H1 (cell line): ENCODE measurements at regions of chr10 and their contacts with region 1.

Region 1: GRCh38 chr10:52004342-52004949 is 305.1 kb upstream of the CSTF2T start:
- DNase-seq: no peak
- H3K4me3 ChIP-seq: no peak overlapping the region
- H3K27ac ChIP-seq: no peak overlapping the region
- H3K4me1 ChIP-seq: no peaks in the 10 kb centered on the region
- H3K27me3 ChIP-seq: no peaks in the 10 kb centered on the region
- CTCF ChIP-seq: peak in 2 of 3 experiments; percentile 20 to 60; a peak in 2 of 4 replicates
- EP300 ChIP-seq: no peak
- POLR2A ChIP-seq: no peak
- RAD21 ChIP-seq: peak; percentile 71 to 79

Region 2: DNA sequence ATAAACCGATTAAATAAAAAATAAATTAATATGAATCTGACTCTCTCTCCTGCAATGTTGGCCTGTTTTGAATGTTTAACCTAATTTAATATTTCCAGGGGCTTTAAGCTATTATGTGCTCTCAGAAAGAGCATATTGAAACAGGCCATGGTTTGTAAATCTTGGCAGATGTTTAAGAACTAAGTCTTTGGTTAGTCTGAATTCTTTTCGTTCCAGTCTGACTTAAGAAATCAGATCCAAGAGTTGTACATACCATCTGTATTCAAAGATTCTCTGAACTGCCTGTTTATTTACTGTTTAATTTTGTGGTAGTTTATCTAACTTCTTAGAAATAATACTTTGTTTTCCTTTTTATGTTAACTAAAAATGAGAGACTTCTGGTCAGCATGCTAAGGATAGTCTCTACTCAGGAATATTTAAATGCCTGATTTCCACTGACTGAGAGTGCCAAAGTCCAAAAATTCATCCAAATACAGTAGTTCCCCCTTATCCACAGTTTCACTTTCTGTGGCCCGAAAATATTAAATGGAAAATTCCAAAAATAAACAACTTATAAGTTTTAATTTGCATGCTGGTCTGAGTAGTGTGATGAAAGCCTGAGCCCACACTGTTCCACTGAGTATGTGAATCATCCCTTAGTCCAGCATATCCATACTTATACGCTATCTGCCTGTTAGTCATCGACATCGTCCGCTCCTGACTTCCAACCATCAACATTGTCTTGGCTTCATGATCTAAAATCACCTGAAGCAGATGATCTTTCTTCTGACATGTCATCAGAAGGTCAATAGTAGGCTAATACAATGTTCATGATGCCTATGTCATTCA is 66.9 kb before region 1 on chr10:
- CTCF ChIA-PET with region 1: no interaction called
- POLR2A ChIA-PET with region 1: no interaction called
- DNase-seq: no peak
- H3K4me3 ChIP-seq: no peak overlapping the region
- H3K27ac ChIP-seq: no peak overlapping the region
- H3K4me1 ChIP-seq: no peaks in the 10 kb centered on the region
- H3K27me3 ChIP-seq: no peaks in the 10 kb centered on the region
- CTCF ChIP-seq: no peak
- EP300 ChIP-seq: no peak
- POLR2A ChIP-seq: no peak
- RAD21 ChIP-seq: no peak

Region 3: DNA sequence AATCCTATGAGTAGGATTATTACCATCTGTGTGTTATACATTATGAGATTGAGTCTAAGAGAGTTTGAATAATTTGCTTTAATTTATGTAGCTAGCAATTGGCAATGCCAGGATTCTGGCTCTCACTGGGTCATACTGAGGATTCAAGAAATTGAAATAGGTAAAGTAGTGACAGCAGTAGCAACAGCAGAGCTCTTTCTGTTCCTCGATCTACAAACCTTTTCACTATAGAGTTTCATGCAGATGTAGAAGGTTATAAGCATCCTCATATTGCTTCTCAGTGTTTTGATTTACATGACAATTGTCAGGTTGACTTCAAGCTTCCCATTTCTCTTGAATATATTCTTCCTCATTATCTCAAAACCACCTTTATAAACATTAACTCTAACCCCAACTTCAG is 11.0 kb before region 1 on chr10:
- CTCF ChIA-PET with region 1: interaction called, 39 read pairs
- POLR2A ChIA-PET with region 1: no interaction called
- DNase-seq: no peak
- H3K4me3 ChIP-seq: no peak overlapping the region
- H3K27ac ChIP-seq: no peak overlapping the region
- H3K4me1 ChIP-seq: no peaks in the 10 kb centered on the region; a peak in 1 of 7 replicates
- H3K27me3 ChIP-seq: no peaks in the 10 kb centered on the region
- CTCF ChIP-seq: no peak
- EP300 ChIP-seq: no peak
- POLR2A ChIP-seq: no peak
- RAD21 ChIP-seq: no peak

Region 4: GRCh38 chr10:52082307-52082706 is 77.9 kb after region 1 on chr10:
- CTCF ChIA-PET with region 1: no interaction called
- POLR2A ChIA-PET with region 1: no interaction called
- DNase-seq: no peak
- H3K4me3 ChIP-seq: no peak overlapping the region
- H3K27ac ChIP-seq: no peak overlapping the region
- H3K4me1 ChIP-seq: peaks cover 0 to 2% (median 0%) of the 10 kb centered on the region in 4 experiments; a peak in 1 of 7 replicates
- H3K27me3 ChIP-seq: no peaks in the 10 kb centered on the region
- CTCF ChIP-seq: no peak
- EP300 ChIP-seq: no peak
- POLR2A ChIP-seq: no peak
- RAD21 ChIP-seq: no peak